ENCODE measurements at regions of chr18 and their contacts with region 1.

Region 1: GRCh38 chr18:59996370-59996966 is 96.7 kb downstream of the PMAIP1 start:
- DNase-seq: peak in 1 of 6 donors; percentile 24
- ATAC-seq: peak in 3 of 4 donors; percentile 56 to 66 (median 64)
- H3K4me3 ChIP-seq: no peak overlapping the region
- H3K27ac ChIP-seq: no peak overlapping the region
- H3K4me1 ChIP-seq: no peaks in the 10 kb centered on the region
- H3K27me3 ChIP-seq: peaks cover 0 to 9% (median 0%) of the 10 kb centered on the region in 4 donors
- CTCF ChIP-seq: peak in 3 of 4 donors; percentile 11 to 40 (median 32)

Region 2: DNA sequence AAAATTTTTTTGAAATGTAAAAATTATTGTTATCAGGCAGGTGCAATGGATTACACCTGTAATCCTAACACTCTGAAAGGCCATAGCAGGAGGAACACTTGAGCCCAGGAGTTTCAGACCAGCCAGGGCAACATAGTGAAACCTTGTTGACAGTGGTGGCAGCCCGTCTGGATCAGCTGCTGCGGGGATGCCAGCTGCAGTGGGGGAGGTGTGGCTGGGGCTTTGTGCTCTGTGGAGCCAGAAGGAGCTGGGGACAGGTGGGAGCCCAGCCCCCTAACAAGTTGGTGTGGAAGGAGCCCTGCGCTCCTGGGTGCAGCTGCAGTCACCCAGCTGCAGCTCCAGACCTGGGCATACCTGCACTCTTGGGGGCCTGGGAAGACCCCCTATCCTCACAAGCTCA is 558.5 kb after region 1 on chr18:
- intact Hi-C with region 1: loop called in 1 of 3 experiments (anchors 10 kb)
- DNase-seq: peak in 1 of 6 donors; percentile 40
- ATAC-seq: no peak
- H3K4me3 ChIP-seq: no peak overlapping the region
- H3K27ac ChIP-seq: no peak overlapping the region
- H3K4me1 ChIP-seq: no peaks in the 10 kb centered on the region
- H3K27me3 ChIP-seq: no peaks in the 10 kb centered on the region
- CTCF ChIP-seq: no peak